ENCODE measurements at regions of chr15 and their contacts with region 1.

Region 1: GRCh38 chr15:69462493-69463181 is 10.0 kb downstream of the RPLP1 start:
- DNase-seq: peak; percentile 99
- ATAC-seq: peak; percentile 95
- H3K4me3 ChIP-seq: peak overlapping the region; percentile 51
- H3K27ac ChIP-seq: peak overlapping the region; percentile 80
- H3K4me1 ChIP-seq: peaks cover 10% of the 10 kb centered on the region
- H3K27me3 ChIP-seq: no peaks in the 10 kb centered on the region
- CTCF ChIP-seq: peak; percentile 95
- POLR2A ChIP-seq: peak; percentile 91
- RAD21 ChIP-seq: no peak

Region 2: GRCh38 chr15:69058830-69059556 is 403.6 kb before region 1 on chr15:
- CTCF ChIA-PET with region 1: interaction called, 6 read pairs
- POLR2A ChIA-PET with region 1: no interaction called
- dilution Hi-C with region 1: no loop called
- in situ Hi-C with region 1: no loop called
- intact Hi-C with region 1: loop called (anchors 1 kb)
- DNase-seq: peak; percentile 81
- ATAC-seq: peak; percentile 92
- H3K4me3 ChIP-seq: no peak overlapping the region
- H3K27ac ChIP-seq: no peak overlapping the region
- H3K4me1 ChIP-seq: no peaks in the 10 kb centered on the region; the same call in 1 of the 2 replicates
- H3K27me3 ChIP-seq: peaks cover 29% of the 10 kb centered on the region
- CTCF ChIP-seq: peak; percentile 88
- POLR2A ChIP-seq: peak; percentile 37
- RAD21 ChIP-seq: peak; percentile 98

Region 3: DNA sequence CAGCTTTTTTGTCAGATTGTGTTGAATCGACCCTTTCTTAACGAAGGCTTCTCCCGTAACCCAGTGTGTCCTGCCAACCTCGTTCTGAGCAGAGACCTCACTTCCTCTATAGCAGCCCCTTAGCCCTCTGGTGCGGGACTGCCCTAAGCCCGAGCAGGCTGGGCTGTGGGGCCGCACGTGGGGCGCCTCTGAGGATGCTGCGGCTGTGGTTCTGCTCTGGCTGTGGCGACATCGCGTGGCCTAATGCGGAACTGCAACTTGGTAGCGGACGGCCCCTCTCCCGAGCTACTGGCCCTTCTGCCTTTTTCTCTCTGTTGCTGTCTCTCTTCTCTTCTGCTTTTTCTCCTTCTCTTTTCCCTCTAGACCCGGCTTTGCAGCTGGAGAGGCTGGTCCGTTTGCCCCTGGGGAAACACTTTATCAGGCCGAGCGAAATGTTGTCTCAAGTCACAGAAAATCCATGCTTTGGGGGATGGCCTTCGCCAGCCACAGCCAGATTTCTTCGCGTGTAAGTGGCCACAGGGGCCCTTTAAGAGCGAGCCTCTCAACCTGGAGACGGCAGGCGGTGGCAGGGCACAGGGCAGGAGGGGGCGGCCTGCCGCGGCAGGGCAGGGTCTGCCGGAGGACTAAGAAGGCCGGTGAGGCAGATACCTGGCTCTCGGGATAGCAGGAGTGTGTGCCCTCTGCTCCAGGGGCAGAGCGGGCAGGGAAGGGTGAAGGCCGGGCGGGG is 67.9 kb before region 1 on chr15:
- CTCF ChIA-PET with region 1: no interaction called
- POLR2A ChIA-PET with region 1: no interaction called
- dilution Hi-C with region 1: no loop called
- in situ Hi-C with region 1: no loop called
- intact Hi-C with region 1: no loop called
- DNase-seq: peak; percentile 64
- ATAC-seq: peak; percentile 90
- H3K4me3 ChIP-seq: no peak overlapping the region
- H3K27ac ChIP-seq: no peak overlapping the region
- H3K4me1 ChIP-seq: peaks cover 12% of the 10 kb centered on the region
- H3K27me3 ChIP-seq: no peaks in the 10 kb centered on the region
- CTCF ChIP-seq: peak; percentile 90
- POLR2A ChIP-seq: no peak
- RAD21 ChIP-seq: peak; percentile 96

Region 4: DNA sequence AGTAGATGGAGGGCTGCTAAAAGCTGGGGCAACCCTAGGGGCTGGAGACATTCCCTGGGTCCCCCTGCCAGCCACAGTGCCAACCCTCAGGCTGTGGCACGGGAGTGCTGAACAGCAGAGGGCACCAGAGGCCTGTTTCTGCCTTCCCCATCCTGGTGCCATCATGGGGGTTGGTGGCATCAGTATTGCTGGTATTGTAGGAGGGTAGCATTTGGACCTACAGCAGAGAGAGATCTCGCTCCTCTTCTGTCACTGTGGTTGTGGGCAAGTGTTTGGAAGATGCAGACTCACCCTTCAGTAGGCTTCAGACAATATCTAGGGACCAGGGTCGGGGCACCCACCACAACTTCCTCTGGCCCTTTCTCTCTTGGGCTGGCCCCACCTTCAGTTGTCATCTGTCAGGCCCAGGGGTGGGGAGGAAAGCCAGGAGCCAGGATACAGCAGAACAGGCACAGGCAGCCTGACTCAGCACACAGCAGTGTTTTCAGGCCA is 113.4 kb after region 1 on chr15:
- CTCF ChIA-PET with region 1: no interaction called
- POLR2A ChIA-PET with region 1: no interaction called
- dilution Hi-C with region 1: no loop called
- in situ Hi-C with region 1: no loop called
- intact Hi-C with region 1: no loop called
- DNase-seq: no peak
- ATAC-seq: peak; percentile 74
- H3K4me3 ChIP-seq: no peak overlapping the region
- H3K27ac ChIP-seq: no peak overlapping the region
- H3K4me1 ChIP-seq: no peaks in the 10 kb centered on the region
- H3K27me3 ChIP-seq: peaks cover 65% of the 10 kb centered on the region
- CTCF ChIP-seq: peak; percentile 59
- POLR2A ChIP-seq: no peak
- RAD21 ChIP-seq: peak; percentile 74

Region 5: GRCh38 chr15:69593981-69594966 is 131.6 kb after region 1 on chr15:
- CTCF ChIA-PET with region 1: no interaction called
- POLR2A ChIA-PET with region 1: no interaction called
- dilution Hi-C with region 1: no loop called
- in situ Hi-C with region 1: no loop called
- intact Hi-C with region 1: no loop called
- DNase-seq: peak; percentile 38
- ATAC-seq: peak; percentile 64
- H3K4me3 ChIP-seq: no peak overlapping the region
- H3K27ac ChIP-seq: no peak overlapping the region
- H3K4me1 ChIP-seq: no peaks in the 10 kb centered on the region; the same call in 1 of the 2 replicates
- H3K27me3 ChIP-seq: peaks cover 64% of the 10 kb centered on the region
- CTCF ChIP-seq: no peak
- POLR2A ChIP-seq: no peak
- RAD21 ChIP-seq: no peak

Region 6: DNA sequence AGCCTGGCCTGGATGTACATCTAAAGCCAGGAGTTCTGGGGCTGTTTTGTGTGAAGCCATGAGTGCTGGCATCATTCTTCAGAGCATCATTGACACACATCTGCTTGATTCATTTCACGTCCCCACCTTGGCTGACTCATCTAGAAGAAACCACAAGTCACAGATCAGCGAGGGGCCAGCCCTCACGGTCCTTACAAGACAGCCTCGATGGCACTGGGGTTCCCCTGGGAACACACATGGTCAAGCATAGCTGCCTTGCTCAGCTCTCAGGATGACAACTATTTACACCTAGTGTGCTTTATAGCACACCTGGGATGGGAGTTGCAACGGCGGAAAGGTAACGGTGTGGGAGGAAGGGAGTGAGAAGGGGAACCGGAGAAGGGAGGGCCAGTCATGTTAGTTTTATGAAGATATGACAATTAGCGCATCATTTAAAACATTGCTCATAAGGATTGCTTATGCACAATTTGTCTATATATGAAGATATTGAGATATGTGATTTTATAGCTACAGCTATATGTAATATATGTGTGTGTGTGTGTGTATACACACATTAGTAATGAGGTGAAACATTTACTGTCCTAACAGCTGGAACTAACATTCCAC is 217.1 kb after region 1 on chr15:
- CTCF ChIA-PET with region 1: no interaction called
- POLR2A ChIA-PET with region 1: no interaction called
- dilution Hi-C with region 1: no loop called
- in situ Hi-C with region 1: no loop called
- intact Hi-C with region 1: no loop called
- DNase-seq: no peak
- ATAC-seq: no peak
- H3K4me3 ChIP-seq: no peak overlapping the region
- H3K27ac ChIP-seq: no peak overlapping the region
- H3K4me1 ChIP-seq: no peaks in the 10 kb centered on the region
- H3K27me3 ChIP-seq: peaks cover 37% of the 10 kb centered on the region
- CTCF ChIP-seq: no peak
- POLR2A ChIP-seq: no peak
- RAD21 ChIP-seq: no peak